ENCODE measurements at regions of chr5 and their contacts with region 1.

Region 1: GRCh38 chr5:50962934-50963872 is 296.8 kb downstream of the PARP8 start:
- DNase-seq: peak; percentile 56
- H3K4me3 ChIP-seq: peak overlapping the region in 2 of 3 experiments; percentile 37
- H3K27ac ChIP-seq: no peak overlapping the region
- H3K4me1 ChIP-seq: no peaks in the 10 kb centered on the region
- H3K27me3 ChIP-seq: peaks cover 35 to 50% of the 10 kb centered on the region in 2 experiments
- CTCF ChIP-seq: peak; percentile 94 to 99
- POLR2A ChIP-seq: no peak

Region 2: DNA sequence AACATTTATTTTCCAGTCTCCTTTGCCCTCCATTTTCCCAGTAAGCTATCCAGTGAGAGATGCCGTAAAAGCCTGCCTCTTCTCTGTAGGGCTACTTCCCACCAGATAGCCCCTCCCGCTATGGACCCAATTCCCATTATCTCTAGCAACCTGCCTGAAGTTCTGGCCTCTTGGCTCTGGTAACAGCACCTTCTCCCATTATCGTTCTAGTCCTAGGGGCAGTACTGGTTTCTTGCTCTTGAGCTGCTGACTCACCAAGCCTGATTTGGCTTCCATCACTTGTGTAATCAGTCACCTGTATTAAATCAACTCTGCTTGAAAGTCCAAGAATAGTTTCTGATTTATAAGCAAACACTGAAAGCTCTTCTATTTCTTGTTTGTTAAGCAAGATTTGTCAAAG is 339.5 kb before region 1 on chr5:
- CTCF ChIA-PET with region 1: no interaction called
- POLR2A ChIA-PET with region 1: no interaction called
- dilution Hi-C with region 1: no loop called
- intact Hi-C with region 1: no loop called
- DNase-seq: no peak
- H3K4me3 ChIP-seq: no peak overlapping the region
- H3K27ac ChIP-seq: no peak overlapping the region
- H3K4me1 ChIP-seq: no peaks in the 10 kb centered on the region
- H3K27me3 ChIP-seq: no peaks in the 10 kb centered on the region
- CTCF ChIP-seq: no peak
- POLR2A ChIP-seq: no peak

Region 3: GRCh38 chr5:50751064-50751657 is 212.0 kb before region 1 on chr5:
- CTCF ChIA-PET with region 1: no interaction called
- POLR2A ChIA-PET with region 1: no interaction called
- dilution Hi-C with region 1: no loop called
- intact Hi-C with region 1: no loop called
- DNase-seq: no peak
- H3K4me3 ChIP-seq: no peak overlapping the region
- H3K27ac ChIP-seq: no peak overlapping the region
- H3K4me1 ChIP-seq: no peaks in the 10 kb centered on the region
- H3K27me3 ChIP-seq: no peaks in the 10 kb centered on the region
- CTCF ChIP-seq: peak; percentile 26 to 36
- POLR2A ChIP-seq: no peak

Region 4: GRCh38 chr5:51156838-51157237 is 193.6 kb after region 1 on chr5:
- CTCF ChIA-PET with region 1: no interaction called
- POLR2A ChIA-PET with region 1: no interaction called
- dilution Hi-C with region 1: no loop called
- intact Hi-C with region 1: no loop called
- DNase-seq: no peak
- H3K4me3 ChIP-seq: no peak overlapping the region
- H3K27ac ChIP-seq: no peak overlapping the region
- H3K4me1 ChIP-seq: no peaks in the 10 kb centered on the region
- H3K27me3 ChIP-seq: no peaks in the 10 kb centered on the region
- CTCF ChIP-seq: no peak
- POLR2A ChIP-seq: no peak

Region 5: GRCh38 chr5:51382763-51383490 is 419.7 kb after region 1 on chr5 and contains the start of gene ISL1:
- CTCF ChIA-PET with region 1: interaction called, 14 read pairs
- POLR2A ChIA-PET with region 1: interaction called, 3 read pairs
- dilution Hi-C with region 1: no loop called
- intact Hi-C with region 1: loop called (anchors 2 kb)
- DNase-seq: peak; percentile 90
- H3K4me3 ChIP-seq: peak within 1 kb of the TSS; percentile 46 to 69 (median 55)
- H3K27ac ChIP-seq: peak within 1 kb of the TSS; percentile 40
- H3K4me1 ChIP-seq: peaks cover 18% of the 10 kb centered on the region
- H3K27me3 ChIP-seq: peaks cover 47 to 86% of the 10 kb centered on the region in 2 experiments
- CTCF ChIP-seq: no peak
- POLR2A ChIP-seq: peak; percentile 55
- total RNA-seq, gene ISL1: 0.53 and 1.1 TPM in 2 replicates

Region 6: DNA sequence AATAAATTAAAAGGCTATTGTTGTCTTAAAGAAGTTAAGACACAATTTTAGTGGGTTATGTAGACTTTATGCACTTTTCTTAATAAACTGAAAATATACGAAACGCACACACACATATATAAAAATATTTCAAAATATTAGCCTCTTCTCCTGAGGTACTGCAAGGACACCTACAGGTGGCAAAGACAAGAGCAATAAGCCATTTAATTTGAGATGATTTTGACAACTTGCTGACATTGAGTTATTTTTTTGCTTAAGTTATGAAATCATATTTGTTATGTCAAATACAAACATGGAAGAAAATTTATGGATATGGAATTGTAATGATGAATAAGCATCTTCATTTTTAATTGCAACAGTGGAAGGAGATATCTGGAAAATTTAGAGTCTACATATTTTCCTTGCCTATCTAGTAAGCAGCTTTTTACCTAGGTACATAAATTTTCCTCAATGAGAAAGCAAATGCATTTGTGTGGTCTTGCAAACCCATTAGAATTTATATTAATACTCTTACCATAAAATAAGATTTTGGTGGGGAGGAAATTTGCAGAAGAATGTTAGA is 721.7 kb after region 1 on chr5:
- CTCF ChIA-PET with region 1: interaction called, 13 read pairs
- POLR2A ChIA-PET with region 1: no interaction called
- dilution Hi-C with region 1: no loop called
- intact Hi-C with region 1: loop called (anchors 1 kb)
- DNase-seq: peak; percentile 8
- H3K4me3 ChIP-seq: no peak overlapping the region
- H3K27ac ChIP-seq: no peak overlapping the region
- H3K4me1 ChIP-seq: no peaks in the 10 kb centered on the region
- H3K27me3 ChIP-seq: no peaks in the 10 kb centered on the region
- CTCF ChIP-seq: peak in 1 of 2 donors; percentile 18
- POLR2A ChIP-seq: no peak

Region 7: DNA sequence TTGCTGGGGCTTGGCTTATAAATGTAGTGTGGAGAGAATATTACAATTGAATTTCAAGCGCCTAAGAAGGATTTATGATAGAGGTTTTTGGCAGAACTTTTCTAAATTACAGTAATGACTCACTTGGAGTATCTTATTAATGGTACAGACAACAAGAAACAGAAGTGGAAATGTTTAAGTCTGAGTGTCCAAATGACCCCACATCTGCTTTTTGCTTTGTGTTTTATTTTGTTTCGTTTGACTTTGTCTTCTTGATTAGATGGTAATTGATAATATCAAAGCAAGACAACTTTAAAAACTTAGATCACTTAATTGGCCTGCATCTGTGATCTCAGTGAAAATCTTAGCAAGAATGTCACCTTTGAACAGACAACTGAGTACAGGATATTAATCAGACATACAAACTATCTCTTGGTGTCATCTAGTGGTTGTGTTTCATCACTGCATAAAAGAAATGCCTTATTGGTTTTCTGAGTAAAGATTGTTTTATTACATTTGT is 997.5 kb after region 1 on chr5:
- CTCF ChIA-PET with region 1: interaction called, 18 read pairs
- POLR2A ChIA-PET with region 1: no interaction called
- dilution Hi-C with region 1: no loop called
- intact Hi-C with region 1: loop called (anchors 1 kb)
- DNase-seq: peak; percentile 14
- H3K4me3 ChIP-seq: no peak overlapping the region
- H3K27ac ChIP-seq: no peak overlapping the region
- H3K4me1 ChIP-seq: no peaks in the 10 kb centered on the region
- H3K27me3 ChIP-seq: no peaks in the 10 kb centered on the region
- CTCF ChIP-seq: peak in 1 of 2 donors; percentile 31
- POLR2A ChIP-seq: no peak

Region 8: GRCh38 chr5:52356311-52356918 is 1393.2 kb after region 1 on chr5:
- CTCF ChIA-PET with region 1: interaction called, 36 read pairs
- POLR2A ChIA-PET with region 1: no interaction called
- dilution Hi-C with region 1: no loop called
- intact Hi-C with region 1: loop called (anchors 1 kb)
- DNase-seq: peak; percentile 30
- H3K4me3 ChIP-seq: no peak overlapping the region
- H3K27ac ChIP-seq: no peak overlapping the region
- H3K4me1 ChIP-seq: no peaks in the 10 kb centered on the region
- H3K27me3 ChIP-seq: no peaks in the 10 kb centered on the region
- CTCF ChIP-seq: peak; percentile 34 to 45
- POLR2A ChIP-seq: no peak

Region 9: GRCh38 chr5:52657247-52657645 is 1694.0 kb after region 1 on chr5:
- CTCF ChIA-PET with region 1: interaction called, 39 read pairs
- POLR2A ChIA-PET with region 1: no interaction called
- dilution Hi-C with region 1: no loop called
- intact Hi-C with region 1: loop called (anchors 1 kb)
- DNase-seq: peak; percentile 58
- H3K4me3 ChIP-seq: no peak overlapping the region
- H3K27ac ChIP-seq: no peak overlapping the region
- H3K4me1 ChIP-seq: no peaks in the 10 kb centered on the region
- H3K27me3 ChIP-seq: peaks cover 9 to 19% of the 10 kb centered on the region in 2 experiments
- CTCF ChIP-seq: peak; percentile 19 to 21
- POLR2A ChIP-seq: no peak

Measured in endothelial cell of umbilical vein (primary cell).